ENCODE measurements at regions of chr2 and their contacts with region 1.

Region 1: GRCh38 chr2:219177552-219178376 is at the start of gene RETREG2:
- DNase-seq: peak; percentile 34 to 93
- H3K4me3 ChIP-seq: peak within 1 kb of the TSS; percentile 91 to 99
- H3K27ac ChIP-seq: peak within 1 kb of the TSS; percentile 97 to 98
- H3K4me1 ChIP-seq: peaks cover 4 to 22% of the 10 kb centered on the region in 2 donors
- H3K27me3 ChIP-seq: no peaks in the 10 kb centered on the region
- CTCF ChIP-seq: peak in 2 of 3 experiments; percentile 11 to 19
- total RNA-seq, gene RETREG2: 83.5 TPM

Region 2: DNA sequence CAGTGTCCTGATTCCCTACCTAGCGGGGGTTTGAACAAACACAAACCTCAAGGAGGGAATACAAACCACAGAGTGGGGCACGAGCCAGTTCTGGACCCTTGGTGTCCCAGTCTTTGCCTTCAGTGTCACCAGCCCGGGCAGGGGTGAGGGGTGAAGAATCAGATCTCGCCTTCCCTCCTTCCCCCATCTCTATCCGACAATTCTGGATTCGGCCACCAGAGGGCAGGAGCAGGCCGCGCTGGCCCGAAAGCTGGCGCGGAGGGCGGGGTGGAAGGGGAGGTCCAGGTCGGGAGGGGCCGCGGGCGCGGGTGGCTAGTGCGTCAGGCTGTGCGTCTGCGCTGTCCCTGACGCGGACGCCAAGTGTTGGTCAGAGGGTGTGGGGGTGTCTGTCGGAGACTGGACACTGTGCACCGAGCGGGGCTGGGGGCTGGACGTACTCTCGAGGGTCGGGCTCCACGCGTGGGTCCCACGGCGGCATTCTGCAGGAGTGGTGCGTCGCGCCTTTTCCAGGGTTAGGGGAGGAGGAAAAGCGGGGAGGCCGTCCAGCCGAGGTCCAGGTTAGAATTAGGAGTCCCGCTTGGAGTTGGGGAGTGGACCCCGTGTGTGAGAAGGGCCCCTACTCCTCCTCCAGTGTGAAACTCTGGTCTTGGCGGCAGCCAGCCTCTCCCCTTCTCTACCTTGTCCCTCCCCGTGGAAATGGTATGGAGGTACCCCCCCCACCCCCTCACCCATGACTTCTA is 181.6 kb before region 1 on chr2:
- intact Hi-C with region 1: no loop called
- DNase-seq: peak; percentile 47 to 94
- H3K4me3 ChIP-seq: peak overlapping the region; percentile 26 to 54
- H3K27ac ChIP-seq: no peak overlapping the region
- H3K4me1 ChIP-seq: peaks cover 13 to 24% of the 10 kb centered on the region in 2 donors
- H3K27me3 ChIP-seq: peaks cover 41% of the 10 kb centered on the region
- CTCF ChIP-seq: peak; percentile 86 to 93 (median 90)

Region 3: GRCh38 chr2:219160186-219161017 is 17.4 kb before region 1 on chr2 and contains the start of gene NHEJ1:
- intact Hi-C with region 1: loop called (anchors 1 kb)
- DNase-seq: peak; percentile 88 to 98
- H3K4me3 ChIP-seq: peak within 1 kb of the TSS; percentile 66 to 86
- H3K27ac ChIP-seq: peak within 1 kb of the TSS; percentile 86 to 89
- H3K4me1 ChIP-seq: peaks cover 0 to 8% of the 10 kb centered on the region in 2 donors
- H3K27me3 ChIP-seq: no peaks in the 10 kb centered on the region
- CTCF ChIP-seq: peak; percentile 97 to 100 (median 100)
- total RNA-seq, gene NHEJ1: 21.6 TPM

Region 4: DNA sequence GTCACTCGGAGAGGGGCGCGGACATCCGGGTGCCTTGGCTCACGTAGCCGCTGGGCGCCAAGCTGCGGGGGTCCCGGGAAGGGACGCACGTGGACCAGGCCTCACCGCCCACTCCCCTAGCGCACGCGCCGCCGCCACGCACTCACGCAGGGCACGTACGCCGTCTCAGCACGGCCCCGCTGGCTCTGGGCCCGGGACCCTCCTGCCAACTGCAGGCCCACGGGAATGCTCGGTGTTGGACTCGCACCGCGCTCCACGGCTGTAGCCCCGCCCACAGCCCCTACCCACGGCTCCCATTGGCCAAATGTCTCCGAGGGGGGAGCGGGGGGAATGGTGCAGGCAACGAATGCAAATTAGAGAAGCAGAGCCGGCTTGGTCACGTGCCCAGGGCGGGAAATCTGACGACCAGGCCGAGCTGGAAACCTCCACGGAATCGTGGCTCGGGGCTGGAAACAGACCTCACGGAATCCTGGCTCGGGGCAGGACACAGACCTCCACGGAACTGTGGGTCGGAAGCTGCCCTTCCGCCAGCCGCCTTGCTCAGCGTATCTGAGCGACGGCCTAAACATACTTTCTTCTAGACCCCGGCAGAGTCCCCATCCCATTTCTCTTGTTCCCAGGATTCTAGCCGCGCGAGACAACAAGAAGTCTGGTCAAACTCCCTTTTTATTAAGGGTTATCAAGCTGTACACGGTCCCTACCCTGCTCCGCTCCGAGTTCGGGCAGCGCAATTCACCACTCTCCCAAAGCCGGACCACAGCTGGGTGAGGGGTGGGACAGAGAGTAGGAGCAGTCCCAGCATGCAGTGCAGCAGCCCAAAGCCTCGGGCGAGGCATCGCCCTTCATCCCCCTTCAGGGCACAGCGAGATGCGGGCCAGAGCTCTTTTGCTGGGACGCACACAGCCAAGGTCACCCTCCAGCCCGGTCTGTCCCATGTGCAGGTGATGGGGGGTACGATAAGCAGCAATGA is 41.3 kb after region 1 on chr2 and contains the start of gene ABCB6:
- intact Hi-C with region 1: loop called (anchors 1 kb)
- DNase-seq: peak; percentile 93 to 99
- H3K4me3 ChIP-seq: peak within 1 kb of the TSS; percentile 64 to 68
- H3K27ac ChIP-seq: peak within 1 kb of the TSS; percentile 92 to 95
- H3K4me1 ChIP-seq: peaks cover 12 to 31% of the 10 kb centered on the region in 2 donors
- H3K27me3 ChIP-seq: no peaks in the 10 kb centered on the region
- CTCF ChIP-seq: no peak
- total RNA-seq, gene ABCB6: 17.9 TPM

Region 5: DNA sequence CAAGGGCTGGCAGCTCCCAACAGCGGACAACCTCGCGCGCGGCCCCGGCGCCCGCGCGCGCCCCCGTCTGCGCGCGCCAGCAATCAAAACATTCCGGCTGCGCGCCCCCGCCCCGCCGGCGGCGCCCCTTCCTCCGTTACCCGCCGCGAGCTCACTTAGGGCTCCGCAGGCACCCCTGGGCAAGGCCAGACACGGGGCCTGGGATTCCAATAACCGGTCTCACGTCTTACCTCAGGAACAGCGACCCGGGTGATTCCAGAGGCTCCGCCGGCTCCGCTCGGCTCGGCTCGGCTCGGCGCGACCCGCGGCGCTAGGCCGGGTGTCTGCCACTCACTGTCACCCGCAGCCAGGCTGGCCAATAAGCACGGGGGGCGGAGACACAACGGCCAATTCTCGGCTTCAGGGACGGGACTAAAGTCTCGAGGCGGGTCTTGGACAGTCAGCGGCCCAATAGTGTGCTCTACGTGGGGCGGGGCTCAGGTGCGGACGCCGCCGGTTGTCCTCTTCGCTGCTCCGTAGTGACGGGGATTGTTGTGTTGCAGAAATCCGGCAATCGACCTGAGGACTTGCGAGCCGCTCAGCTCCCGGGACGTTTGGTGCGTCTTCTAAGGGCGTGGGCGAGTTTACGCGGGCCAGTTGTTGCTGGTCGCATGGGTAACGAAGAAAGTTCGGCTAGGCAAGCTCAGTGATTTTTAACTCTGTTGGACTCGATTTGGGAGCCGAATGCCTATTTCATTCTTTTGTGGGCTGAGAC is 51.7 kb after region 1 on chr2 and contains the starts of genes ANKZF1 and ATG9A:
- intact Hi-C with region 1: loop called (anchors 1 kb)
- DNase-seq: peak; percentile 98 to 99
- H3K4me3 ChIP-seq: peak within 1 kb of the TSS; percentile 66 to 96
- H3K27ac ChIP-seq: peak within 1 kb of the TSS; percentile 93 to 97
- H3K4me1 ChIP-seq: peaks cover 4 to 23% of the 10 kb centered on the region in 2 donors
- H3K27me3 ChIP-seq: no peaks in the 10 kb centered on the region
- CTCF ChIP-seq: no peak
- total RNA-seq, gene ANKZF1: 53.1 TPM
- total RNA-seq, gene ATG9A: 135 TPM

Region 6: GRCh38 chr2:219253753-219254590 is 76.2 kb after region 1 on chr2 and contains the start of gene TUBA4A:
- intact Hi-C with region 1: loop called (anchors 2 kb)
- DNase-seq: peak; percentile 58 to 93
- H3K4me3 ChIP-seq: peak within 1 kb of the TSS; percentile 70 to 73
- H3K27ac ChIP-seq: peak within 1 kb of the TSS; percentile 96 to 99
- H3K4me1 ChIP-seq: peaks cover 15 to 39% of the 10 kb centered on the region in 2 donors
- H3K27me3 ChIP-seq: no peaks in the 10 kb centered on the region
- CTCF ChIP-seq: peak in 1 of 3 experiments; percentile 8
- total RNA-seq, gene TUBA4A: 71.1 TPM